ENCODE measurements at regions of chr13 and their contacts with region 1.

Region 1: GRCh38 chr13:49652355-49653305 is 24.3 kb downstream of the ARL11 start:
- DNase-seq: peak; percentile 37
- H3K4me3 ChIP-seq: no peak overlapping the region
- H3K27ac ChIP-seq: no peak overlapping the region
- H3K4me1 ChIP-seq: peaks cover 12% of the 10 kb centered on the region
- H3K27me3 ChIP-seq: no peaks in the 10 kb centered on the region
- CTCF ChIP-seq: peak; percentile 42 to 52
- POLR2A ChIP-seq: no peak

Region 2: DNA sequence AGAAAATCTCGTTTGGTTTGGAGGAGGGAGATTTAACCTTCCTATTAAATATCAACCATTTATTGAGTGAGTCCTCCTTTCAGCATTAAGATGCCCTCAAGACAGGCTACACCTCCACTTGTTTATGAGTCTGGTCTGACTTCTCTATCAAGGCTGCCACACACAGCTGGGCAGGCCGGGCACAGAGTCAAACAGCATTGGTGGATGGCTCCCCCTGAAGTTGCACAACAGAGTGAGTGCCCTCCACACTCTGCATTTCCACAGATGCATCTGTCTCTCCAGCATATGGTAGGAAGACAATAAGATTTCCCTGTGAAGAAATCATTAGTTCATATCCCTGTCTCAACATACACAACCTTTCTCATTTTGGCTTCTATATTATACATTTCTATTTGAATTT is 125.5 kb before region 1 on chr13:
- CTCF ChIA-PET with region 1: no interaction called
- POLR2A ChIA-PET with region 1: no interaction called
- dilution Hi-C with region 1: no loop called
- intact Hi-C with region 1: no loop called
- DNase-seq: no peak
- H3K4me3 ChIP-seq: no peak overlapping the region
- H3K27ac ChIP-seq: no peak overlapping the region
- H3K4me1 ChIP-seq: no peaks in the 10 kb centered on the region
- H3K27me3 ChIP-seq: no peaks in the 10 kb centered on the region
- CTCF ChIP-seq: no peak
- POLR2A ChIP-seq: no peak

Region 3: DNA sequence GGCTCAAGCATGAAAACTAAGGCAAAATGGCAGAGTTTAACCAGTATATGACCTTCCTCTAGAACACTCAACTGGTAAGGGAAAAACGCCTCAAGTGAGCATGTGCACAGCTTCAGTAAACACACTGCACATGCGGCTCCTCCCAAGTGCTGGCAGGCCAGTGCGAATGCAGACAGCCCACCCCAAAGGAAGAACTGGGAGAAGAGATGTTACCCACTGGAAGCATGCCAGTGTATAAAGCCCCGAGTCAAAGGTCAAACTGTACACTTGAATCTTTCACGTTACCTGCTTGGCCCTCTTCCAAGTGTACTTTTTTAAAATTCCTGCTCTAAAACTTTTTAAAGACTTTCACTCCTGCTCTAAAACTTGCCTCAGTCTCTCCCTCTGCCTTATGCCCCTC is 48.1 kb before region 1 on chr13:
- CTCF ChIA-PET with region 1: no interaction called
- POLR2A ChIA-PET with region 1: no interaction called
- dilution Hi-C with region 1: no loop called
- intact Hi-C with region 1: no loop called
- DNase-seq: no peak
- H3K4me3 ChIP-seq: no peak overlapping the region
- H3K27ac ChIP-seq: no peak overlapping the region
- H3K4me1 ChIP-seq: no peaks in the 10 kb centered on the region
- H3K27me3 ChIP-seq: no peaks in the 10 kb centered on the region
- CTCF ChIP-seq: no peak
- POLR2A ChIP-seq: no peak

Region 4: GRCh38 chr13:49615836-49616675 is 36.6 kb before region 1 on chr13:
- CTCF ChIA-PET with region 1: no interaction called
- POLR2A ChIA-PET with region 1: no interaction called
- dilution Hi-C with region 1: no loop called
- intact Hi-C with region 1: loop called (anchors 1 kb)
- DNase-seq: peak; percentile 89
- H3K4me3 ChIP-seq: peak overlapping the region in 1 of 3 experiments; percentile 2
- H3K27ac ChIP-seq: peak overlapping the region; percentile 79
- H3K4me1 ChIP-seq: peaks cover 15% of the 10 kb centered on the region
- H3K27me3 ChIP-seq: no peaks in the 10 kb centered on the region
- CTCF ChIP-seq: no peak
- POLR2A ChIP-seq: no peak

Region 5: GRCh38 chr13:49679246-49679645 is 26.6 kb after region 1 on chr13:
- CTCF ChIA-PET with region 1: no interaction called
- POLR2A ChIA-PET with region 1: no interaction called
- dilution Hi-C with region 1: no loop called
- intact Hi-C with region 1: no loop called
- DNase-seq: peak; percentile 21
- H3K4me3 ChIP-seq: no peak overlapping the region
- H3K27ac ChIP-seq: no peak overlapping the region
- H3K4me1 ChIP-seq: no peaks in the 10 kb centered on the region
- H3K27me3 ChIP-seq: no peaks in the 10 kb centered on the region
- CTCF ChIP-seq: no peak
- POLR2A ChIP-seq: no peak

Region 6: DNA sequence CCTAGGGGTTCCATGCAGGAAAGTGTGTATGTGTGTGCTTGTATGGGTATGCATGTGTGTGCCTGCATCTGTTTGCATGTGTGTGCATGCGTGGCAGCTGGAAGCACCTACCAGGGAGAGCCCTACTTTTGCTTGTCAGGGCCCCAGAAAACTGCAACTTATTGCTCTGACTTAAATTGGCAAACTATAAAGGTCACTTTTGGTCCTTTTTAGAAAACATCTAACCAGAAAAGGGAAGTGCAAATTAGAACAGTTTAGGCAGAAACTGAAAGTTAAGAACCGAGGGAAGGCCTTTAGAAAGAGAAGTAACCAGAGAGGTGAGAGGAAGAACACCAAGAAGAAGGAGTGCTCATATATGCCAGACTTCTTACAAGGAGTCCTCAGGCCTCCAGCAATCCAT is 1158.4 kb after region 1 on chr13:
- CTCF ChIA-PET with region 1: no interaction called
- POLR2A ChIA-PET with region 1: no interaction called
- dilution Hi-C with region 1: no loop called
- intact Hi-C with region 1: no loop called
- DNase-seq: no peak
- H3K4me3 ChIP-seq: no peak overlapping the region
- H3K27ac ChIP-seq: no peak overlapping the region
- H3K4me1 ChIP-seq: no peaks in the 10 kb centered on the region
- H3K27me3 ChIP-seq: peaks cover 0 to 9% of the 10 kb centered on the region in 2 experiments
- CTCF ChIP-seq: no peak
- POLR2A ChIP-seq: no peak

Measured in endothelial cell of umbilical vein (primary cell).